ENCODE measurements at regions of chr16 and their contacts with region 1.

Region 1: GRCh38 chr16:55470533-55471371 is 8.2 kb upstream of the MMP2 start:
- DNase-seq: no peak
- CTCF ChIP-seq: no peak

Region 2: DNA sequence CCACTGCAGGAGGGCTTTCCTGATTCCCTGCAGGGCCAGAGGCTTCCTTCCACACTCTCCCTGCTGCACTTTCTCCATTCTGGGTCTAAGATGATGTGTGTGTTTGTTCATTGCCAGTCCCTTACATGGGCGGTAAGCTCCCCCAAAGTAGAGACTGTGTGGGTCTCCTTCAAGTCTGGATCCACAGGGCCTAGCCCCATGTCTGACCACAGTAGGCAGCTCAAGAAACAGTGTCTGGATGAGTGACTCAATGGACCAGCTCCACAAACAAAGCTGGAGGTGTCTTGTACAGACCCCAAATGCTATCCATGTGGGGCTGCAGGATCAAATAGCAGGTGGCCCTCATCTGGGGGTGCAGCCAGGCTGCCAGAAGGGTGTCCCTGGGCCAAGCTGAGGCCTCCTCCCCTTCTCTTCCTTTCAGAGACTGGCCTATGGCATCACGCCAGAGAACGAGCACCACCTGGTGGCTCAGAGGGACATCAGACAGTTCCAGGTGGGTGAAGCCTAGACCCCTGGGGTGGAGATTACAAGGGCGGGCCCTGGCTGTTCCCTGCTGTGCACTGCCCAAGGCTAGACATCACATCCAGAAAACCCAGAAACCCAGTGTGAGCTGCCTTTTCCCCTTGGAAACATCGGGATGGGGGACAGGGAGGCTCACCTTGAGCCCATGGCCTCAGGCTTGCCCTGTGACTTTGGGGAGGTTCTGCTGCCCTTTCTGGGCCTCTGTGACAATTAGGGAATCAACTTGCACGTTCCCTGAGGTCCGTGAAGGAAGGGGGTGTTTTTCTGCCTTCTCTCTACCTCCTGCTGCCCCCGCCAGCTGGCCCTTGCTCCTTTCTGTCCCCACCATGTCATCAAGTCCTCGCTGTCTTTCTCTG is 230.9 kb after region 1 on chr16:
- CTCF ChIA-PET with region 1: interaction called, 176 read pairs
- POLR2A ChIA-PET with region 1: no interaction called
- DNase-seq: peak; percentile 60
- CTCF ChIP-seq: peak; percentile 63

Measured in GM10248 (cell line).